Lower leg skin (tissue), 4 donors: ENCODE measurements at regions of chr5 and their contacts with region 1.

Region 1: GRCh38 chr5:177468696-177469628 is 4.5 kb downstream of the DBN1 start:
- DNase-seq: no peak
- H3K4me3 ChIP-seq: no peak overlapping the region
- CTCF ChIP-seq: no peak
- POLR2A ChIP-seq: no peak

Region 2: DNA sequence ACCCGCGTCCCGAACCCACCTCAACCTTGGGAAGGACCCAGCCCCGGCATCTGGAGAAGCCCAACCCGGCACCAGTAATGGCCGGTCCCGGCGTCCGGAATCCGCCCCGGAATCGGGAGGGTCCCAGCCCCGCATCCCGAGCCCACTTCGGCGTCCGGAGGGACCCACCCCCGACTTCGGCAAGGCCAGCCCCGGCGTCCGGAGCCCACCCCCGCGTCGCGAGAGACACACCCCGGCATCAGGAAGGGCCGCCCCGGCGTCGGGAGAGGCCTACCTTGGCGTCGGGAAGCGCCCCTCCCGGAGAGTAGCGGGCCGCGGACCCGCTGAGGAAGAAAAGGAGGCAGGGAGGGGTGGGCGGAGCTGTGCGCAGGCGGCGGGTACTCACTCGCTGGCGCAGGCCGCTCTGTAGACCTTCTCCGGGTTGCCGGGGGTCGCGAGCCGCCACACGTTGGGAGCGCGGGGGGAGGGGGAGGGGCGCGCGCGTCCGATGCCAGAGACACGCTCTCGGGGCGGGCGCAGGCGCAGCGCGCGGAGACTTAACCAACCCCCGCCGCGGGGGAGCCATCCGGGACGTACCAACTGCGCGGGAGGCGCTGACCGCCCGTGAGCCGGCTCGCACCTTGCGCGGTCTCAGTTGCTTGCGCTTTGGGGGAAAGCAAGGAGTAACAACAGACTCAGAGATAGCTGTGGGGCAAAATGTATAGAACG is 462.5 kb before region 1 on chr5 and contains the start of gene UIMC1:
- intact Hi-C with region 1: loop called (anchors 5 kb)
- DNase-seq: peak; percentile 78 to 98
- H3K4me3 ChIP-seq: peak within 1 kb of the TSS; percentile 94
- CTCF ChIP-seq: no peak
- POLR2A ChIP-seq: no peak
- total RNA-seq, gene UIMC1: 18.2 to 31.0 (median 29.2) TPM